ENCODE measurements at regions of chr16 and their contacts with region 1.

Region 1: DNA sequence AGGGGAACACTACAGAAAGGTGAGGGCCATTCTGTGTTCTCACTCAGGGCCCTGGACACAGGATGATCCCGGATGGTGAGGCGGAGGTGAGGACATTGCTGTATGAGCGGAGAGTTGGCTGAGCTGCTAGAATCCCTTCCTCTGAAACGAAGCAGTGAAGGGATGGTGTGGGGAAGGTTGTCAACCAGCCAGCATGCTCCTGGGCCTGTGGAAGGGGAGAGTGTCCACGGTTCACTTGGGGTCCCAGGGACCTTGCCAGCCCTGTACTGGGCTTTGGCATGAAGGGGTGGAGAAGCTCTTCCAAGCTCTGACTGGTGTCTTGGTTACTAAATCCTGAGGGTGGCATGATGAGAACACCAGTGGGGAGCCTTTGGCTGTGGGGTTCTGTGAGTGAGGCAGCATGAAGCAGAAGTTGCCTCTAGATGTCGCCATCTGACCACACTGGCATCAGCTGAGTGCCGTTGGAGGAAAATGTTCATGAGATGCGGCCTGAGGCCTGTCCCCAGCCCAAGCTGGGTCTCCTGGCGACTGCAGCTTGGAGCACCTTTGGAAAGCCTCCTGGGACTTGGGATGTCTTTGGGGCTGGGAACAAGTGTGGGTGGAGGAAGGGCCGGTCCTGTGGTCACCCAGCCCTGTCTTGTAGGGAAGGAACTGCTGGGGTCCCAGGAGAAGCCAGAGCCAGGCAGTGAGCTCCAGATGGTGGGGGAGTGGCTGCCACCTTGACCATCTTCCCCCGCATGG is 14.8 kb downstream of the PDP2 start:
- DNase-seq: no peak

Region 2: DNA sequence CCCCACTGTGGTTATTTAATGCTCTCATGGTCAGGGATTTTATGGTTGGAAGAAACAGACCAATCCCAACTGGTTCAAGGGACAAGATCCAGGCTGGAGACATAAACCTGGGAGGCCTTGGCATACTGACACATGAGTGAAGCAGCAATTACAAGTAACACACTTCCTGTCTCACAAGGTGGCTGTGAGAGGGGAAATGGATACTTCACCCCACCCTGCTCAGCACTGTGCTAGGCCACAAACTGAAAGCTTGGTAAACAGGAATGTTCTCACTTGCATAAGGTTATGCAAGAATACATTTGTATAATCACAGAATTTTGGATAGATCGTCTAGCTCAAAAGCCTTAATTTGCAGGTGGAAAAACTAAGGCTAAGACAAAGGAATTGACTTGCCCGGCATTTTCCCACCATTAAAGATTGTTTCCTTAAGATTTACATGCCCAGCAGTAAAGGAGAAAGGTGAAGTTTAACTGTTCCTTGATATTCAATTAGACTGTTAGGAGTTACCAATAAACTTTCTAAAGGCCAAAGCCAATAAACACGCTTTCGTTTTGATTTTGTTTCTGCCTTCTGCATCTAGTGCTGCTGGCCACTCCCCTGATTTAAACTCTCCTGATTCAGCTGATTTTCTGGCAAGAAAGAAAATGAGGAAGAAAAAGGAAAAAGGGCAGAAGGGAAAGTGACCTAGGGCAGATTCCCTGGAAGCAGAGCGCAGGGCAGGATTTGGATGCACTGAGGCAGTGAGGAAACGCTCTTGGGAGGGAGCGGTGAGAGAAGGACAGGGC is 744.2 kb before region 1 on chr16:
- intact Hi-C with region 1: no loop called
- DNase-seq: no peak

Region 3: DNA sequence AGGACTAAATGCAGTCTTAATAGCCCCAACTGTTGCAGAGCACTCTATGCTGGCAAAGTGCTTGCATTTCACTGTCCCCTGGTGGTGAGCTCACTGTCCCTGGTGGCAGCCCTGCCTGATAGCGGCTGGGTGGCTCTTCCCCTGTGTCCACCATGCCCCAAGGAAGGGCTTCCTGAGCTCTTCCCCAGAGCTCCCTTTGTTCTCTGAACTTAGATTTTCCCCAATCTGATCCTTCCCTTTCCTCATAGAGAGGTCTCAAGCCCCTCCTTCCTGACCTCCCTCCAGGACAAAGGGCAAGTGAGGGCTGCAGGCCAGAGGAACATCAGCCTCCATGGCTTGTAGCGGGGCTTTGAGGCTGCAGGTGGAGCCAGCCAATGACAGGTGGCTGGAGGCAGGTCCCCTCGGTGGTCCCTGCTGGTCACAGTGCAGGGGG is 451.1 kb before region 1 on chr16:
- intact Hi-C with region 1: no loop called
- DNase-seq: no peak

Region 4: GRCh38 chr16:66924527-66925321 is 29.6 kb after region 1 on chr16:
- intact Hi-C with region 1: loop called in 1 of 2 experiments (anchors 5 kb)
- DNase-seq: no peak

Region 5: GRCh38 chr16:66934153-66934838 is 39.2 kb after region 1 on chr16 and contains the start of gene CIAO2B:
- intact Hi-C with region 1: loop called (anchors 5 kb)
- DNase-seq: peak; percentile 97
- total RNA-seq, gene CIAO2B: 53.0 to 60.3 TPM